K562 (cell line): ENCODE measurements at regions of chr2 and their contacts with region 1.

Region 1: GRCh38 chr2:86562922-86563649 is at the start of gene CHMP3:
- DNase-seq: peak; percentile 98 to 99 (median 98)
- ATAC-seq: peak; percentile 94
- H3K4me3 ChIP-seq: peak within 1 kb of the TSS; percentile 74
- H3K27ac ChIP-seq: peak within 1 kb of the TSS; percentile 100
- H3K4me1 ChIP-seq: peaks cover 0 to 17% of the 10 kb centered on the region in 2 experiments; a peak in 3 of 5 replicates
- H3K27me3 ChIP-seq: no peaks in the 10 kb centered on the region
- CTCF ChIP-seq: no peak
- EP300 ChIP-seq: 0 out of 2 replicates have a peak, but pooled peaks have one; percentile 10
- POLR2A ChIP-seq: peak; percentile 96
- RAD21 ChIP-seq: no peak
- polyA plus RNA-seq, gene CHMP3: 20.6 to 26.3 TPM

Region 2: GRCh38 chr2:86623651-86624541 is 60.8 kb after region 1 on chr2 and contains the start of gene RNF103:
- CTCF ChIA-PET with region 1: interaction called, 3 read pairs
- POLR2A ChIA-PET with region 1: no interaction called
- in situ Hi-C with region 1: no loop called
- intact Hi-C with region 1: loop called (anchors 5 kb)
- DNase-seq: peak; percentile 91 to 94 (median 91)
- ATAC-seq: peak; percentile 94
- H3K4me3 ChIP-seq: peak within 1 kb of the TSS; percentile 61
- H3K27ac ChIP-seq: peak within 1 kb of the TSS; percentile 85
- H3K4me1 ChIP-seq: peaks cover 4 to 13% of the 10 kb centered on the region in 2 experiments; a peak in 4 of 5 replicates
- H3K27me3 ChIP-seq: no peaks in the 10 kb centered on the region
- CTCF ChIP-seq: no peak
- EP300 ChIP-seq: no peak
- POLR2A ChIP-seq: peak; percentile 78
- RAD21 ChIP-seq: 0 out of 4 replicates have a peak, but pooled peaks of 1 of the 2 experiments have one; percentile 10
- polyA plus RNA-seq, gene RNF103: 1.2 to 1.4 TPM